Heart left ventricle (tissue), 16 donors: ENCODE measurements at regions of chr13 and their contacts with region 1.

Region 1: GRCh38 chr13:112978561-112979405 is 9.8 kb downstream of the MCF2L start:
- DNase-seq: peak in 4 of 5 donors; percentile 70 to 80 (median 76)
- ATAC-seq: peak; percentile 46 to 73 (median 56)
- H3K4me3 ChIP-seq: peak overlapping the region in 11 of 12 donors; percentile 46 to 77 (median 61)
- H3K27ac ChIP-seq: peak overlapping the region; percentile 72 to 96 (median 86)
- H3K4me1 ChIP-seq: peaks cover 2 to 37% (median 12%) of the 10 kb centered on the region in 12 donors
- H3K27me3 ChIP-seq: no peaks in the 10 kb centered on the region
- CTCF ChIP-seq: no peak
- POLR2A ChIP-seq: peak in 1 of 2 donors; percentile 65

Region 2: GRCh38 chr13:112959206-112959605 is 19.6 kb before region 1 on chr13:
- intact Hi-C with region 1: loop called in 3 of 10 experiments (anchors 1 to 2 kb)
- DNase-seq: peak; percentile 61 to 73 (median 64)
- ATAC-seq: peak; percentile 75 to 89 (median 78)
- H3K4me3 ChIP-seq: peak overlapping the region in 1 of 12 donors; percentile 15
- H3K27ac ChIP-seq: peak overlapping the region; percentile 74 to 95 (median 88)
- H3K4me1 ChIP-seq: peaks cover 0 to 41% (median 18%) of the 10 kb centered on the region in 12 donors
- H3K27me3 ChIP-seq: no peaks in the 10 kb centered on the region
- CTCF ChIP-seq: no peak
- POLR2A ChIP-seq: peak in 1 of 2 donors; percentile 35

Region 3: DNA sequence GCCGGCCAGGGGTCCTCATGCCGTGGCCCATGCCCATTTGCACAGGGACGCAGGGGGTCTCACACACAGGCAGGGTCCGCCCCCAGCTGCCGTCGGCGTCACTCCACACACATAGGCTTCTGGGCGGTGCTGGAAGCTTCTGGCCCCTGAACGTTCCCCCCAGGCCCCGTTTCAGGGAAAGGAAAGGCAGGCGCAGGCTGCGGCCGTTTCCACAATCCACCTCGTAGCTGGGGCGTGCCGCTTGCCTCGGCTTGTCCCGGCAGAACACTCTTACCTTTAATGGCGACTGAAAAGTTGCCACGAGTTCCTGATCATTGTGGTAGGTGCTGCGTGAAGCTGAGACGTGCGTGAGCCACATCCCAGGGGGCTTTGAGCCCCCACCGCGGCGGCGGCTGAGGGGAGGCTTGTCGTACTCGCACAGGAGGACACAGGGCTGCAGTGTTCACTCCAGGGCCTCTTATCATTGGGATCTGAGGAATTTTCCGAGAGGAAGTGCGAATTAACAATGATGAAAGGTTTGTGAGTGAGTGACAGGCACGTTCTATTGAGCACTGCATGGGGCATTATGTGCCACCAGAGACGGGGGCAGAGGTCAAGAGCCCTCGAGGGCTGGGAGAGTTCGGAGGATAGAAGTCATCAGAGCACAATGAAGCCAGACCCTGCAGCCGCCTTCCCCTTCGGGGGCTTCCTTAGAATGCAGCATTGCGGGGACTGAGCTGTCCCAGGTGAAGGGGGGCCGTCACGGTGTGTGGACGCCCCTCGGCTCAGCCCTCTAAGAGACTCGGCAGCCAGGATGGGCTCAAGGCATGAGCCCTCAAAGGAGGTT is 43.8 kb after region 1 on chr13:
- intact Hi-C with region 1: loop called in 1 of 10 experiments (anchors 2 kb)
- DNase-seq: no peak
- ATAC-seq: peak; percentile 4 to 47 (median 38)
- H3K4me3 ChIP-seq: peak overlapping the region in 2 of 12 donors; percentile 6 to 12
- H3K27ac ChIP-seq: peak overlapping the region in 10 of 12 donors; percentile 15 to 75 (median 58)
- H3K4me1 ChIP-seq: peaks cover 0 to 32% (median 10%) of the 10 kb centered on the region in 12 donors
- H3K27me3 ChIP-seq: peaks cover 0 to 5% (median 0%) of the 10 kb centered on the region in 9 donors
- CTCF ChIP-seq: no peak
- POLR2A ChIP-seq: no peak

Region 4: GRCh38 chr13:113997845-113998668 is 1019.3 kb after region 1 on chr13:
- intact Hi-C with region 1: no loop called
- DNase-seq: peak; percentile 42 to 76 (median 69)
- ATAC-seq: peak; percentile 16 to 79 (median 44)
- H3K4me3 ChIP-seq: no peak overlapping the region
- H3K27ac ChIP-seq: peak overlapping the region in 5 of 12 donors; percentile 2 to 51 (median 26)
- H3K4me1 ChIP-seq: peaks cover 0 to 16% (median 0%) of the 10 kb centered on the region in 12 donors
- H3K27me3 ChIP-seq: no peaks in the 10 kb centered on the region
- CTCF ChIP-seq: no peak
- POLR2A ChIP-seq: no peak